Right ventricle myocardium superior (tissue), 1 donor: ENCODE measurements at regions of chr22 and their contacts with region 1.

Region 1: DNA sequence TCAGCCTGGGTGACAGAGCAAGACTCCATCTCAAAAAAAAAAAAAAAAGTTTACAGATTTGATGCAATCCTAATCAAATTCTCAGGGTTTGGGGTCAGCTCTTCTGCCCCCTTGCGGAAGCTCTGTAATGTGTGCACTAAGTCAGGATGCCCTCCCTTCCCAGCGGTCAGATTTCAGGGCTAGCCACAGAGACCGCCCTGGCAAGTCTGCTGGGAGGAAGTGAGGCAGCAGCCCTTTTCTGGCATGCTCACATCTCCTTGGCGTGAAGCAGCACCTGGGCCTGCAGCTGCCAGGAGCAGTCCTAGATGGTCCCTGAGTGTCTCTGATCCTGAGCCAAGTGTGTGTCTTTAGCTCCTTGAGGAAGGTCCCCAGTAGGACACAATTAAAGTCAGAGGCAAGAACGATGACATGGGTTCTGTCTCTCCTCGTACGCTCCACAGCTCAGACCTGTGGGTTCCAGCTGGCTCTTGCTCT is 10.9 kb upstream of the APOBEC3C start:
- DNase-seq: peak; percentile 76
- ATAC-seq: peak; percentile 92

Region 2: DNA sequence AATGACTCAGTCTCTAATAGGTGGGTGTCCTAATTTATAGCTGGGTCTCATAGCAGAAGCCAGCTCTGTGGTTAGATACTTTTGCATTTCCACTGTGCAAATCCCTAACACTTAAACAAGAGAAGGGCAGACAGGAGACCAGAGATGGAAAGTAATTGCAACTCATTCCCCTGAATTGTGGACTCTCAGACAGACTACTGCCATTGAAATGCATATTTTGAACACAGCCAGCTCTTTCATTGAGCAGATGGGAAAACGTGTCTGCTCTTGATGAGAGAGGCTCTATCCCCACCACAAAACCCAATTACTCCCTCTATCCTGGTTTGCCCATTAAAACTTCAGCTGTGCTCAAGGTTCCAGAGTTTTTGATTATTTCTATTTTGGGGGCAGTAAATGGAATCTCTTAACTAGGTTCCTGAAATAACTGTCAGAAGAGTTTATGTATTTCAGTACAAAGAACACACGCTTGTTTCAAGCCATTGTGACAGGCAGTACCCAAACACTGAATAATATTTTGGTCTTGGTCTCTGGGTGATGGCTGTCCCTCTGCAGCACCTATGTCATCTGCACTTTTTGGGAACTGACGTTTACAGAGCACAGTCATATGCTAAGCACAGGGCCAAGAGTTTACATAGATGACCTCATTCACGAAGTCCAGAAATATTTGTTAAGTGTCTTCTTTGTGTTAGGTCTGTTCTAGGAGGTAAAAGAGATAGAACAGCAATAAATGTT is 388.7 kb before region 1 on chr22:
- intact Hi-C with region 1: no loop called
- DNase-seq: no peak
- ATAC-seq: peak; percentile 87

Region 3: GRCh38 chr22:38777087-38777671 is 226.0 kb before region 1 on chr22:
- intact Hi-C with region 1: loop called (anchors 10 kb)
- DNase-seq: no peak
- ATAC-seq: no peak

Region 4: DNA sequence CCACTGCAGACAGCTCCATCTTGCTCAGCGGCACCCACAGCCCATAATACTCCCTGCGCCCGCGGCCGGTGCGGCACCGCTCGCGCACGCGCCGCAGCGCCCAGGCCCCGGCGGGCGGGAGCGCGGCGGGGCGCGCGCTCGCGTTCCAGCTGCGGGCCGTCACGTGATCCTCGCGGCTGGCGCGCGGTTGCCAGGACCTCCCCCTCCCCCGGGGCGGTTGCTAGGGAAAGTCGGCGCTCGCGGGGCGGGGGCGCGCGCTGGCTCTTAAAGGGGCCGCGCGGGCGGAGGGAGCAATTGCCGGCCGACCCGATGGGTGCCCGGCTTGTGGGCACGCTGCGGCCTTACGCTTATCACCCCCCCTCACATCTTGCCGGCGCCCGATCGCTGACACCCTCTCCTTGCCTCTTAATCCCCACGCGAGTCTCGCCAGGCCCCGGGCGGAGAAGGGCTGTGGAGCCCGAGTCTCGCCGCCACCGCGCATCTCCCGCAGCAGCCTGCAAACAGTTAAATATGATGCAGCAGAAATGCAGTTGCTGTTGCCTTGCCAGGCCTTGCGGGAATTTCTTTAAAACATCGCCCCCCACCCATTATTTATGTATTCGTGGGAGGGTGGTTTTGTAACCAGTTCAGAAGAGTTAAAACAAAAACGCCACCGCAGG is 130.9 kb before region 1 on chr22 and contains the start of gene CBX6:
- intact Hi-C with region 1: loop called (anchors 5 kb)
- DNase-seq: peak; percentile 98
- ATAC-seq: peak; percentile 91
- total RNA-seq, gene CBX6: 36.1 TPM

Region 5: DNA sequence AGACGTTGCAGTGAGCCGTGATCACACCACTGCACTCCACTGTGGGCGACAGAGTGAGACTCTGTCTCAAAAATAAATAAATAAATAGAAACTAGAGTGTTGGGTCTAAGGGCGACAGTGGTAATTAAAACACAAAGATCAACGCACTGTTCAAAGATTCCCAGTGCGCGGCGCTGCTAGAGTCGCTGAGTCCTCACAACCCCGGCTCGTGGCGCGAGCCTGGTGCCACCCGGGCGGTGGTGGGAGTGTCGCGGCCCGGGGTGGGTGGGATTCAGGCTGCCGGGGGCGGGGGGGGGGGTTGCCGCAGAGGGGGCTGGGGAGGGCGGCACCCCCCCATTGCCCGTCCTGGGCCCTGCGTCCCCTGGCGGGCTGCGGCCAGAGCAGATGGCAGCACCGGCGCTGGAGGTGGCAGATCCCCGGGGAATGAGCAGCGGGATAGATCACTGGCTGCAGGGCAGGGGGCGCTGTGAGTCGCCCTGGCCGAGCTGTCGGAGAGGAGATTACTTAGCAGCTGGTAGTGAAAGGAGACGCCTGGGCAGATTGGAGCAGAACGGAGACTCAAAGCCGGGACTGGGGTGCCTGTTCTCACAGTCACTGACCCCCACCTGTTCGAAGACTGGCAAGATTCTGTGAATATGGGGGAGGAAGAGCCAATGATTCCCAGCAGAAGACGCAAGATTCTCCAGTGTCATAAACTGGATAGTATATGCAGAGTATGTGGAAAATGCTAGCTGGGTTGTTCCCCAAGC is 76.0 kb before region 1 on chr22:
- intact Hi-C with region 1: loop called (anchors 5 kb)
- DNase-seq: peak; percentile 85
- ATAC-seq: peak; percentile 86

Region 6: GRCh38 chr22:39123751-39124601 is 120.8 kb after region 1 on chr22:
- intact Hi-C with region 1: loop called (anchors 5 kb)
- DNase-seq: no peak
- ATAC-seq: no peak